Left colon (tissue), 2 donors: ENCODE measurements at regions of chr5 and their contacts with region 1.

Region 1: DNA sequence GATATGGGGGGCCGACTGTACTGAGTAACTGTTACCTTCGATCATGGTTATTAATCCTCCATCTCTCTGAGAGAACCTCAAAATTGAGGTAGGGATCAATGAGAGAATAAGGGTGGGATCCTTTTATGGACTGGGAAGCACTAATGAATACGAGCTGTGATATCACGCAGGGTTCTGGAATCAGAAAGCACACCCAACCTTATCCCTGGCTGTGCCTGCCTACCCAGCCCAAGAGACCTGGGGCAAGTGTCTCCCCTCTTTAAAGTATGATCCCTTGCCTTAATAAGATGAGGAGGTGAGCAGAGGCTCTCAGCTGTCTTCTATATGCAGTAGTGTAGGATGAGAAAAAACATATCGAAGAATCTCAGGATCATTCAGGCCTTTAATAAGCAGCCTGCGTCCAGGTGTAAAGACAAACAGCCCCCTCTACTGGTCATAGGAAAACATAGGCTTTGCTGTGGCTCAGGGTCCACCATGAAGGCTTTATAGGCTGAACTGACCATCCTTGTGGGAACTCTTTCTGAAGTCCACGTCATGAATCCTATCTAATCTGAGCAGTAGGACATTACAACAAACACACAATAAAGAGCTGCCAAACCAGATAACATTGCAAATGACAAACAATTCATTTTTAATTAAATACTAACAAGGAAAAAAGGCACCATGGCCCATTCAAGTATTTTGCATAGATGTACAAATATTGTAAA is 16.8 kb downstream of the NIPAL4 start:
- DNase-seq: no peak
- ATAC-seq: peak; percentile 83

Region 2: DNA sequence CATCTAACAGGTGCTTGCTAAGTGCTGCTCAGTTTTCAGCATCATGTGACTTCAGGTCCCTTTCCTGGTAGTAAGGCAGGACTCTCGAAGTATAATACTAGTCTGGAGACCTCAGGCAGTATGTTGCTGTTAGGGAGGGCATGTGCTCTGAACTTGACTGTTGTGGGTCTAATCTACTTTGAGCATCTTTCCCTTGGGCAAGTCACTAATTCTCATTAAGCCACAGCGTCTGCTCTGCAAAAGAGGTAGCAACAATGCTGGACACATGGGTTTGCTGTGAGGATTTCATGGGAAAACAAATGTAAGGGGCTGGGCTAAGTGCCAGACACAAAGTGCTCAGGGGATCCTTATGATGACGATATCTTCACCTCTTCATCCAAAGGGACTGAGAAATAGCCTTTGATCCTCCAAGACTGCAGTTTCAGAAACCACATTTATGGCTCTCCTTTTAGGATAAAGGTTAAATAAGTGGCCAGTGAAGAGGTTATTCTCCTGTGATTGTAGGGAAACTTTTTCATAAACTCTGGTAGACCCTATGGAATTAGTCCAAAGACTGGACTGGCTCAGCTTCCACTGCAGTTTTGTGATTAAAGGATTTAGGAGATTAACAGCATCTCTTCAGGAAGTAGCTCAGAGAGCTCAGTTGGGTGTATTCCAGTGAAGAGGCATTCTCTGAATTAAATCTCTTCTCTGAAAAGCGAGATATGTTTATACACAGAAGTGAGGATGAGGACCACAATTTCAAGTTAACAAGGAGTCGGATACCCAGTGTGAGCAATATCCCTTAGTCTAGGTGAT is 933.3 kb before region 1 on chr5:
- intact Hi-C with region 1: no loop called
- DNase-seq: no peak
- ATAC-seq: no peak

Region 3: DNA sequence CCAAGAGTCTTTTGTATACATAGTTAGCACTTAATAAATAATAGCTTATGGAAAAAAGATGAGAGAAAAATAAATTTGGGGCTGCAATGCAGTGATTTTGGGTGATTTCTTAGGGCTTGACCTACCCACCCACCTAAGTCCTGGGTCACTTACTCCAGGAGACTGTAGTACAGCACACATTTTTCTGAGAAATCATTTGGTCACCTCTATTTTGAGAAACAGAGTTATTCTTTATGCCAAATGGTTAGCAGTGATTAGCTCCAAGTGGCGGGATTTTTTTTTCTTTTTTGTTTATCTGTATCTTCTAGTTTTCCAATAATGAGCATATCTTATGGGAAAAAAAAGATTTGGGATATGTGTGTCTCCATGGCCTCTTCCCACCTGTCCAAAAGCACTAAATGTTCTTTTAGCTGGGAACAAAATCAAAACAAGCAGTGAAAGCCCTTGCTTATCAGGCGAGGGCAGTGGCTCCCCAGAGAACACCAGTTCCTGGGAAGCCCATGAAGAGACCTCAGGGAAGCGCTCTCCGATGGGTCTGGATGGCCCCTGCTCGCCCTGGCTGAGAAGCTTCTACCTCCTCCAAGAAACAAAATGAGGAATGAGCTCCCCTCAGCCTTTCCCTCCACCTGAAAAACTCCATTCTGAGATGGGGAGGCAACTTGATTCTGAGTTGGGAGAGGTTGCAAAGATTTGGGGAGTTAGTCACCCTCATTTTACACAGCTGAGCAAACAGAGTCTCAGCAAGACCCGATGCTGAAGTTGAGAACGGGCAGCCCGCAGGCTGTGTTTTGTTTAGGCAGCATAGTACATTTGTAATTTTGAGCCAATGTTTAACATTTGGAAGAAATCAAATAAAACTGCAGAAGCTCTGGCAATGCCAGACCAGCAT is 141.1 kb before region 1 on chr5:
- intact Hi-C with region 1: loop called in 1 of 2 experiments (anchors 10 kb)
- DNase-seq: no peak
- ATAC-seq: no peak

Region 4: GRCh38 chr5:157366741-157367674 is 109.8 kb before region 1 on chr5:
- intact Hi-C with region 1: loop called in 1 of 2 experiments (anchors 10 kb)
- DNase-seq: no peak
- ATAC-seq: no peak